Activated CD4-positive, alpha-beta memory T cell treated with anti-CD3 and anti-CD28 coated beads for 36 hours (primary cell): ENCODE measurements at regions of chr3 and their contacts with region 1.

Region 1: GRCh38 chr3:150721285-150722130 is 17.8 kb upstream of the ERICH6 start:
- DNase-seq: no peak
- H3K4me3 Mint-ChIP-seq: peak overlapping the region; percentile 29
- H3K27ac Mint-ChIP-seq: no peak overlapping the region
- H3K4me1 Mint-ChIP-seq: peaks cover 24% of the 10 kb centered on the region
- H3K27me3 Mint-ChIP-seq: no peaks in the 10 kb centered on the region

Region 2: DNA sequence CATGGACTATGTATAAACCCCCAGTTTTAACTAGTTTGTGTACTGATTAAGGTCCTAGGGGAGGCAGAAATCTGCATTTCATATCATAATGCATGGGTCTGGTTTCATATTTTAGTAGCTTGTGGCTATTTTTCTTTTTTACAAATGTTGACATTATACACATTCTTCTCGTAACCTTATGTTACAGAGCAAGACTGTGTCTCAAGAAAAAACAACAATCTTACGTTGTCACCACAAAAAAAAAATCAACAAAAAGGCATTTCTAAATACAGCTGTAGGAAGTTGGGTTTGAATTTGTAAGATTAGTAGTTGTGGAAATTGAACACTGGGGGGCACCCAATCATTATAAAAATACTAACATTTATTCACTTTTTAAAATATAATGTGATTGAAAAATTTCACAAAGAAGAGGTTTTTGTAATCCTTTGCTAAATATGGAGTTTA is 193.1 kb before region 1 on chr3:
- CTCF ChIA-PET with region 1: interaction called, 10 read pairs
- POLR2A ChIA-PET with region 1: no interaction called
- intact Hi-C with region 1: no loop called
- DNase-seq: no peak
- H3K4me3 Mint-ChIP-seq: no peak overlapping the region
- H3K27ac Mint-ChIP-seq: no peak overlapping the region
- H3K4me1 Mint-ChIP-seq: peaks cover 6% of the 10 kb centered on the region
- H3K27me3 Mint-ChIP-seq: no peaks in the 10 kb centered on the region

Region 3: DNA sequence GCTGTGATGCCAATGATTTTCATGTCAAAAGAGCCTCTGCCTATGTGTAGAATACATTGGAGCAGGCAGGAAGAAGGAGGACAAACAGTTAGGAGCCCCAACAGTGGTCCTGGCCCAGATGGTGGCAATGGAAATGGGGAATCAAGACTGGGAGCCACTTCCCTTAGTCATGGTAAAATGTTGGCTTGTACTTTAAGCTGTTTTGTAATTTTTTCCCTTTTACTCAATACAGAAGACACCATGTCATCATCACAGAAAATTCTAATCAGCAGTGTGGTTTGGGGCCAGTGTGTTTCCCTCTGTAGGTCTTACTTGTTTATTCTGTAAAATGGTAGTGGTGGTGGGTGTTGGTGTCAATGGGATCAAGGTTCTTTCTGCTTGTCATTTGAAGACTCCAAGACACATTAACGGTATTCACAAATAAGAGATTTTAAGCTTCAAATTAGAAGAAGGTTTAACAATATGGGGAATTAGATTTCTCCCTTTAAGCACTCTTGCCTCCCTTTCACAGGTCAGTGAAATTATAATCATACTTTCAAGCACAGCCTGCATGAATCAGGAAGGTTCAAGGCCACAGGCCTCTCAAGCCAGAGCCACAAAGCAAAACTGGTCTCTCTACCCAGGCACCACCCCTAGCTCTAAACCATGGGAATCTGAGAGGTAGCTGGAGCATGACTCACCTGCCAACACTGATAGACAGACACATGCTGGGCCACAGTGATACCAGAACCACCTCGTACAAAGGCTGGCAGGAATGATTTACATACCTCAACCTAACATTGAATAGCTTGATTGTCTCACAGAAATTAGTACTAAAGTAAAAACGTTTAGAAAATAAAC is 16.6 kb after region 1 on chr3:
- CTCF ChIA-PET with region 1: interaction called, 14 read pairs
- POLR2A ChIA-PET with region 1: interaction called, 3 read pairs
- intact Hi-C with region 1: loop called (anchors 1 kb)
- DNase-seq: peak; percentile 79
- H3K4me3 Mint-ChIP-seq: peak overlapping the region; percentile 38
- H3K27ac Mint-ChIP-seq: peak overlapping the region; percentile 99
- H3K4me1 Mint-ChIP-seq: peaks cover 73% of the 10 kb centered on the region
- H3K27me3 Mint-ChIP-seq: no peaks in the 10 kb centered on the region

Region 4: DNA sequence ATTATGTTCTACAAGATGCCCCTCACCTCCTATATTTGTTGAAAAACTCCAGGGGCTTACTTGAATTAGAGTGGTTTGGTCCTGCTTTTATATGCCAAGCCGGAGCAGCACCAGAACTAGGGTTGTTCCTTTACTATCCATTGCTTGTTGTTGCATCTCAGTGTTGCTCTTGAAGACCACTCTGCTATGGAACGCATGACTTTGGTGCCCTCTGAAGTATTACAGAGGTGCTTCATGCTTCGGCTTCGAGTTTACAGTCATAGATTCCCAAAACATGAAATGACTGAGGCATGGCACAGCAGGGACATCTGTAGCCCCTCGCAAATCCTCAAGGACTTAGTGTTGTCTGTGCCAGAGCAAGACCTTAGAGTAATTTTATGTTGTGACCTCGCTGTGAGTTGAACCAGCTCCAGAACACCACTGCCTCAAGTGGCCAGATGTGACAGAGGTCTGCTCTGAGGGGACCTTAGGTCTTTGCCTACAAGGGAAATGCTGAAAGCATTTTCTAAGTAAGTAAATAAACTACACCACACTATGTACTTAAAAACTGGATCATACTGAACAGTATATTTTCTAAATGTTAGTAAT is 108.7 kb after region 1 on chr3:
- CTCF ChIA-PET with region 1: interaction called, 13 read pairs
- POLR2A ChIA-PET with region 1: no interaction called
- intact Hi-C with region 1: no loop called
- DNase-seq: peak; percentile 23
- H3K4me3 Mint-ChIP-seq: no peak overlapping the region
- H3K27ac Mint-ChIP-seq: no peak overlapping the region
- H3K4me1 Mint-ChIP-seq: no peaks in the 10 kb centered on the region
- H3K27me3 Mint-ChIP-seq: peaks cover 6% of the 10 kb centered on the region

Region 5: DNA sequence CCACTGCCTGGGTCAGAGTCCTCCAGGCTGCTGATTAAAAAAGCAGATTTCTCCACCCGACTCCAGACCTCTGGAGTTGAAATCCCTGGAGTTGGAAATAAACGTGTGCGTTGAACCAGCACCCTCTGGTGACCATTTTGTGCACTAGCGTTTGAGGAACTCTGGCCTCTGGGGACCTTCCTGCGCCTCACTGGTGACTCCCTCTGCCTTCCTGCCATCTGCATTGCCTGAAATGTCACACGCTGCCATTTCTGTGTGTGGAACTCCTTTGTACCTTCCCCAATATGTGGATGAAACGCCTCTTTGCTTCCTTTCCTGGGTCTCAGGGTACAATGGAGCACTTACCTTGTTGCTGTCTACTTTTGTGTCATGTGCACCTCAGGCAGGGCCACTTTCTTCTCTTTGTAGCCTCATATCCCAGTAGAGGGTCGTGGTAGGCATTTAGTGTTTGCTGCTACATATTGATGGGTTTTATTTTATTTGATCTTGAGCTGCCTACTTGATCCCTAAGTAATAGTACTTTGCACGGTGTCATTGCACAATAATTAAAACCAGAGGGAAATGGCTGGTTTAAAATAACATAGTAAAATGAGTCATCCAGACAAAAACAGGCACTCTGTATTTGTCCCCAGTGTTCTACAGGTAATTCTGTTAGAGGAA is 424.7 kb after region 1 on chr3:
- CTCF ChIA-PET with region 1: interaction called, 3 read pairs
- POLR2A ChIA-PET with region 1: no interaction called
- intact Hi-C with region 1: loop called (anchors 2 kb)
- DNase-seq: peak; percentile 70
- H3K4me3 Mint-ChIP-seq: no peak overlapping the region
- H3K27ac Mint-ChIP-seq: no peak overlapping the region
- H3K4me1 Mint-ChIP-seq: no peaks in the 10 kb centered on the region
- H3K27me3 Mint-ChIP-seq: no peaks in the 10 kb centered on the region